Right ventricle myocardium superior (tissue), 1 donor: ENCODE measurements at regions of chr9 and their contacts with region 1.

Region 1: DNA sequence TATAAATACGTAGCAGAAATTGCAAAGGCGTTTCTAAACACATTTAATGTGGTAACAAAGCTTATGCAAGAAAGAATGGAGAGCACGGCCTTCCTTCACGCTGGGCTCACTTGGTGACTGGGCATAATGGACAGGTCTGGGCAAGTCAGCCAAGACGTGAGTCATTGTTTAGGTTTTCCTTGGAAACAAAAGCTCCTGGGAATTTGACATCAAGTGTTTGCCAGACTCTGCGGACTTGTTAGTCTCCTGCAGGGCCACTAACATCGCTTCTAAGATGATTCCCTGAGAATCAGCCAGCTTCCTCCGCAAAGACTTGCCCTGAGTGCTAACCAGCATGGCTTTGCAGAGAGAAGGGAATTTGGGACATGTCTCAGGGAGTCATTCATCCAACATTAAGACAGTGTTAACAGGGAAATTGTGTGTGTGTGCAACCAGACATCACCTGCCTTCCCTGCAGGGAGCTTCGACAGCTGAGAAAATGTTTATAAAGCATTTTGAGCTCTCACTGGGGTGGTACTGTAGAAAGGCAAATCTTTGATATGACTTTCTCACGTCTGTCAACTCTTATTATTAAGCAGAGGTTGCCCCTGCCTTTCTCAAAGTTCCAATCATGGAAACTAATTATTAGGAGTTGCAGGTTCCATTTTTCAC is 182.5 kb downstream of the NTRK2 start:
- DNase-seq: no peak
- ATAC-seq: peak; percentile 63

Region 2: DNA sequence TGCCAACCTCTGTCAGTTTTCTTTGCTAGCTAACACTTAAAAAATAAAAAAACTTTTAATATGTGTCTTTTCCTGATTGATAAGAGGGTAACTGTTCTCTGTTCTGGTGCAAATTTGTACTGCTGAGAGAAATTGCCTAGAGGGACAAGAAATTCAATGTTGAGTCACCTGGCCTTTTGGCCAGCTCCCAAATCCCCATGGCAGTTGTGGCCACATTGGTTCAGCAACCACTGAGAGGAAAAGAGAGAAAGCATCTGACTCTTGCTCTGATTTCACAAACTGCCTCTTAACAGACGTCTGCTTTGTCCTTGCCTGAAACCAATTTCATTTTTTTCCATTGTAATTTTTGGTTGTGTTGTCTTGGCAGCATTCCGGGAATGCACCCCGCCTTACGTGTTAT is 140.2 kb before region 1 on chr9:
- intact Hi-C with region 1: no loop called
- DNase-seq: no peak
- ATAC-seq: peak; percentile 33

Region 3: DNA sequence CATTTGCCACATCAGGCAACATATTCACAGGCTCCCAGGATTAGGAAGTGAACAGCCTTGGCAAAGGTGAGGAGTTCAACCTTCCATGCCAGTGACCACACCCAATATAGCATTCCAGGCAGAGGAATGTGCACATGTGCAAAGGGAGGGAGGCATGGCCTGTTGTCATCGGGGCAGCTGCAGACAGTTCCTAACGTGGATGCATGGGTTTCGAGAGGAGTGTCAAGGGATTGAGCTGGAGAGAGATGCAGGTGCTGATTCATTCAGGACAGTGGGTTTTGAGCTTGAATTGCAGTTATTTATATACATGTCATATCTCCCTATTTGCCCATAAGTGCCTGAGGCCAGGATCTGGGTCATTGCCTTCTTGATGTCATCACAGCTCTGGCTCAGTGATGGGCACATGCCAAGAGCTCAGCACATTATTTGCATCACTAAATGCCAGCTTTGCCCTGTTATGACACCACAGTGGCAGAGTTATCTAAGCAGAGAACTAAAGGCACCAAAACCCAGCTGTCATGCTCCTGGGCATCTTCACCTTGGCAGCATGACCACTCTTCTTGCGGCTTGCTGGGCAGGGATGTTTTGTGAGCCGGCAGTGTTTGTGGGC is 95.4 kb after region 1 on chr9:
- intact Hi-C with region 1: loop called (anchors 5 kb)
- DNase-seq: no peak
- ATAC-seq: peak; percentile 74